Caco-2 (cell line): ENCODE measurements at regions of chrX and their contacts with region 1.

Region 1: DNA sequence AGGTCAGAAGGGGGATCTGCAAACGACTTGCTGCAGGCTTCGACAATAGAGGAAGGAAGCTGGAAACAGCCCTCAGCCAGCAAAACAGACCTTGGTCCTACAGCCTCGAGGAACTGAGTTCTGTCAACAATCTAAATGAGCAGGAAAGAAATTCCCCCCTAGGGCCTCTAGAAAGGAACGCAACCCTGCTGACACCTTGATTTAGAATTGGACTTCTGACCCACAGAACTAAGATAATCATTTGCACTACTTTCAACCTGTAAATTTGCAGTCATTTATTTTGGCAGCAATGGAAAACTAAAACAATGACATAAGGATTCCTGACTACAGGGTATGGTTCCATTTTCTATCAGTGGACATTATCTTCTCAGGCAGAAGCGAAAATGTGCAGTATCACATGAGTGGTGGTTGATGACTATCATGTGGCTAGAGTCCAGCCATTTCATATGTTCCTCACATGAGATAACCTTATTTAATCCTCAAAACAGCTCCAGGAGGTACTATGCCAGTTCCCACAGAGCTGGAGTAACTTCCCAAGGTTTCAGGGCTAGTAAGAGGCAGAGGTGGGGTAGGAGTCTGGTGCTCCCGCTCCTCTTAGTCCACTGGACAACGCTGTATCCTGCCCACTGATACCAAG is 61.6 kb downstream of the SAT1 start:
- DNase-seq: peak; percentile 52 to 57
- H3K4me3 ChIP-seq: no peak overlapping the region
- H3K4me3 Mint-ChIP-seq: peak overlapping the region; percentile 66
- H3K27ac Mint-ChIP-seq: peak overlapping the region; percentile 85
- H3K4me1 ChIP-seq: peaks cover 17% of the 10 kb centered on the region
- H3K4me1 Mint-ChIP-seq: peaks cover 6% of the 10 kb centered on the region
- H3K27me3 ChIP-seq: no peaks in the 10 kb centered on the region
- H3K27me3 Mint-ChIP-seq: no peaks in the 10 kb centered on the region
- CTCF ChIP-seq: no peak

Region 2: DNA sequence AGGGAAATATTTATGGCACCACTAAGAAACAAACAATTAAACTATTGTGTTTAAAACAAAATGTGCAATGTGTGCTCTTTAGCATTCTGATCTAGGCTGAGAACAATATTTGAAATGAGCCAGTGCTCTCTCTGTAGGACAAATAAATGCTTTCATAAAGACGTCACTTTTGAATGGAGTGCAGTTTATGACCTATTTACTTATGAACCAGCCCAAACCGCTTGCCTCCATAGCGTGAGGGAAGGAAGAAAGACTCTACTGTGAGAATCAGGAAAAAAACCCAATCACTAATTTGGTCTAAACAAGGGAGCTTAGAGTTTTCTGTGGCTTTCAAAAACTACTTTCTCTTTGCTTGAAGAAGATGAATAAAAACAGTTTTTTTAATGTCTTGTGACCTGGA is 22.2 kb before region 1 on chrX:
- CTCF ChIA-PET with region 1: no interaction called
- POLR2A ChIA-PET with region 1: no interaction called
- intact Hi-C with region 1: loop called (anchors 1 kb)
- DNase-seq: peak in 1 of 2 experiments; percentile 36
- H3K4me3 ChIP-seq: no peak overlapping the region
- H3K4me3 Mint-ChIP-seq: peak overlapping the region; percentile 16
- H3K27ac Mint-ChIP-seq: peak overlapping the region; percentile 75
- H3K4me1 ChIP-seq: peaks cover 16% of the 10 kb centered on the region
- H3K4me1 Mint-ChIP-seq: peaks cover 16% of the 10 kb centered on the region
- H3K27me3 ChIP-seq: no peaks in the 10 kb centered on the region
- H3K27me3 Mint-ChIP-seq: no peaks in the 10 kb centered on the region
- CTCF ChIP-seq: no peak

Region 3: DNA sequence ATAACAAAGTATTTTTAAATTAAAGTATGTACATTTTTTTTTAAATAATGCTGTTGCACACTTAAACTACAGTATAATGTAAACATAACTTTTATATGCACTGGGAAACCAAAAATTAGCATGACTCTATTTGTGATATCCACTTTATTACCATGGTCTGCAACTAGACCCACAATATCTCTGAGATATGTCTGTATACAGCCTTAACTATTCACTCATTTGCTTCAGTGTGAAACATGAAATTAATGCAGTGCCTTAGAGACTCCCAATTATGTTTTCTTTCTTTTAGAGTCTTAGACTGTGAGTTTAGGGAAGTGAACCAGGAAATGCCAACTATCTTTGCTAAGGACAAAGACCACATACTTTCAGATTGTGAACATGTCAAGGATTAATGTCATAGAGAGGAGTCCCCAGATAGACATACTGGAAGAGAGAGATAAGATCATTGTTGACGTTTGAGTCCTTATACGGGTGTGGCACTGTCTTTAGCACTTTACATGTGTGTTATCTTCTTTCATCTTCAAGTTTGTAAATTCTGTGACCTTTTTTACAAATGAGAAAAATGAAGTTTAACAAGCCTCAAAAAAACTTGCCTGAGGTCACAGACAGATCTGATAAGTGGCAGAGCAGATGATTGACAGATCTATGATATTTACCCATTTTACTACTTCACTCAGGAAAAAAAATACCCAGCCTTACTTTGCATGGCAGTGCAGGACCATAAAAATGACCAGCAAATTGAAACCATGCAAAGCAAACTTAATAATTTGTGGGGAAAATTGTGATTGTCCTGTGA is 86.5 kb after region 1 on chrX:
- CTCF ChIA-PET with region 1: no interaction called
- POLR2A ChIA-PET with region 1: no interaction called
- intact Hi-C with region 1: no loop called
- DNase-seq: peak; percentile 36 to 51
- H3K4me3 ChIP-seq: no peak overlapping the region
- H3K4me3 Mint-ChIP-seq: no peak overlapping the region
- H3K27ac Mint-ChIP-seq: no peak overlapping the region
- H3K4me1 ChIP-seq: peaks cover 15% of the 10 kb centered on the region
- H3K4me1 Mint-ChIP-seq: no peaks in the 10 kb centered on the region
- H3K27me3 ChIP-seq: no peaks in the 10 kb centered on the region
- H3K27me3 Mint-ChIP-seq: no peaks in the 10 kb centered on the region
- CTCF ChIP-seq: no peak

Region 4: DNA sequence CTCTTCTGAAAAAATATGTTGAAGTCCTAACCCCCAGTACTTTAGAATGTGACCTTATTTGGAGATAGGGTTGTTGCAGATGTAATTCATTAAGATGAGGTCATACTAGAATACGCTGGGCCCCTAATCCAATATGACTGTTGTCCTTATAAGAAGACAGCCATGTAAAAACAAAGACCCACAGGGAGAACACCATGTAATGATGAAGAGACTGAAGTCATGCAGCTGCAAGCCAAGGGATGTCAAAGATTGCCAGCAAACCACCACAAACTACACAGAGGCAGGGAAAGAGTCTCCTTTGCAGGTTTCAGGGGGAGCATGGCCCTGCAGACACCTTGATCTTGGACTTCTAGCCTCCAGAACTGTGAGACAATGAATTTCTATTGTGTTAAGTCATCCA is 100.6 kb after region 1 on chrX:
- CTCF ChIA-PET with region 1: no interaction called
- POLR2A ChIA-PET with region 1: no interaction called
- intact Hi-C with region 1: no loop called
- DNase-seq: no peak
- H3K4me3 ChIP-seq: no peak overlapping the region
- H3K4me3 Mint-ChIP-seq: no peak overlapping the region
- H3K27ac Mint-ChIP-seq: no peak overlapping the region
- H3K4me1 ChIP-seq: no peaks in the 10 kb centered on the region
- H3K4me1 Mint-ChIP-seq: no peaks in the 10 kb centered on the region
- H3K27me3 ChIP-seq: no peaks in the 10 kb centered on the region
- H3K27me3 Mint-ChIP-seq: peaks cover 3% of the 10 kb centered on the region
- CTCF ChIP-seq: no peak